Activated CD8-positive, alpha-beta T cell treated with anti-CD3 and anti-CD28 coated beads for 36 hours (primary cell): ENCODE measurements at regions of chr1 and their contacts with region 1.

Region 1: DNA sequence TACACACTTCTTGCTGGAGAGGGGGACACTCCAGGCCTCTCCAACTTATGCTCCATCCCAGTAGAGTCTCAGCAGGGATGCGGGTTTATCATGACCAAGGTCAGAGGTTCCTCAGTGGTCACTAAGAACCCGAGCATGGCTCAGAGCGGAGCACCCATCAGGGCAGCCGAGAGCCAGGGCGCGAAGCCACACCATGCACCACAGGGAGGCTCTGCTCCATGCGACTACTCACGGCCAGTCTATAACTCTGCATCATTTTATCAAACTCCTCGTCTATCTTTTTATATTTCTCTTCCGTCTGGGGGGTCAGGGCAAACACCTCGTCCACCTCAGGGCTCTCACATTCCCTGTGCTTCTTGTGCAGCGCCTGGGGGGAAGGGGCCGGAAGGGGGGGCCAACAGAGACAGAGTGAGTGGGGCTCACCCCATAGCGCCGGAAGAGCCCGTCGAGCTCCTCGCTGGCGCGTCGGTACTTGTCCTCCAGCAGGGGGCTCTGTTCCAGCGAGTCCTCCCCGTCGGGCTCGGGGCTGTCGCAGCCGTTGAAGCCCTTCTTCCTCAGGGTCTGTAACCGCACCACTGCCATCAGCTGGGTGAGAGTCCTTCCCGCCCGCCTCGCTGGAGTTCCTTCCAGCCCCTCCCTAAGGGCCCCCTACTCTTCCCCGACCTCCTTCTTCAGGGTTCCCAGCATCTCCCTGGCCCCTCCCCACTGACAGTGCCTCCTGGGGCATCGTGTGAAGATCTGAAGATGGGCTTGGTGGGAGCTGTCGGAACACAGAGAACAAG is 20.0 kb downstream of the MEF2D start:
- DNase-seq: peak; percentile 83
- ATAC-seq: peak; percentile 91
- H3K4me3 Mint-ChIP-seq: peak overlapping the region; percentile 20
- H3K27ac Mint-ChIP-seq: peak overlapping the region; percentile 79
- H3K4me1 Mint-ChIP-seq: peaks cover 58% of the 10 kb centered on the region
- H3K27me3 Mint-ChIP-seq: no peaks in the 10 kb centered on the region
- CTCF ChIP-seq: peak; percentile 73

Region 2: DNA sequence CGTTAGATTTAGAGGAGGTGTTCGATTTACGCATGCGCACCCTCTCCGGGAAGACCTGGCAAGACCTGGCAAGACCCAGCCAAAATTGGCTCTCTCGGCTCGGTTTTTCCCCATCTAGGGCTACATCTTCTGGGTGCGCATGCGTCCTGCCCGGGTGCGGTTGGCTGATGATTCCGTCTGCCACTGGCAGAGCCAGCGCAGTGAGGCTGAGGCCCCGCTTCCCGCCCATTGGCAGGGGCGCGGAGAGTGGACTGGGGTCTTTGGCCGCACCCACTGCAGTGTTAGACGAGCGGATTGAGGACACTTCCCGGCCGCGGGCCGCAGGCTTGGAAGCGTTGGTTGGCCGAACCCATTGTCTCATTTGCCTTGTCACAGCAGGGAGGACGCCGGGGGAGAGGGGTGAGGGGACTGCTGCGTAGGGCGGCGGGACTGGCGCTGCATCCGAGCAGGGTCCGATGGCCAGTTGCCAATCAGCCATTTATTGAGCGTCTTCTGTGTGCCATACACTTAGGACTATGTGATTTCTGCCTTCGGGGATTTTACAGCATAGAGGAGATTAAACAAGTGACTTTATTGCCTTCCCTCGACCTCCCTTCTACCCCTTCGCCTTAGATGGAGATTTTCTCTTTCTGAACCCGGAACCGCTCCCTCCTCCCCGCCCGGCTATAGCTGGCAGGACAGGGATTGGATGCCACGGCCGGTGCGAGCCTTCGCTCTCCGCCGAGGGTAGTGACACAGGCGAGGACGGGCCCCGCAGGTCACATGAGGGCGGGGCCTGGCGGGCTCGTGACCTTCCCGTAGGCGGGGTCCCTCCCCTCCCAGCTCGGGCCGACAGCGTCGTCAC is 23.8 kb before region 1 on chr1:
- CTCF ChIA-PET with region 1: interaction called, 22 read pairs
- POLR2A ChIA-PET with region 1: interaction called, 4 read pairs
- intact Hi-C with region 1: no loop called
- DNase-seq: peak; percentile 99
- ATAC-seq: peak; percentile 90
- H3K4me3 Mint-ChIP-seq: peak overlapping the region; percentile 91
- H3K27ac Mint-ChIP-seq: peak overlapping the region; percentile 99
- H3K4me1 Mint-ChIP-seq: peaks cover 19% of the 10 kb centered on the region
- H3K27me3 Mint-ChIP-seq: no peaks in the 10 kb centered on the region
- CTCF ChIP-seq: peak; percentile 1

Region 3: GRCh38 chr1:156500797-156501499 is 20.3 kb after region 1 on chr1:
- CTCF ChIA-PET with region 1: interaction called, 220 read pairs
- POLR2A ChIA-PET with region 1: interaction called, 245 read pairs
- intact Hi-C with region 1: no loop called
- DNase-seq: peak; percentile 94
- ATAC-seq: peak; percentile 71
- H3K4me3 Mint-ChIP-seq: peak overlapping the region; percentile 79
- H3K27ac Mint-ChIP-seq: peak overlapping the region; percentile 95
- H3K4me1 Mint-ChIP-seq: peaks cover 74% of the 10 kb centered on the region
- H3K27me3 Mint-ChIP-seq: no peaks in the 10 kb centered on the region
- CTCF ChIP-seq: peak; percentile 55

Region 4: GRCh38 chr1:156517746-156518145 is 37.1 kb after region 1 on chr1:
- CTCF ChIA-PET with region 1: interaction called, 35 read pairs
- POLR2A ChIA-PET with region 1: interaction called, 3 read pairs
- intact Hi-C with region 1: no loop called
- DNase-seq: no peak
- ATAC-seq: no peak
- H3K4me3 Mint-ChIP-seq: no peak overlapping the region
- H3K27ac Mint-ChIP-seq: no peak overlapping the region
- H3K4me1 Mint-ChIP-seq: no peaks in the 10 kb centered on the region
- H3K27me3 Mint-ChIP-seq: no peaks in the 10 kb centered on the region
- CTCF ChIP-seq: no peak

Region 5: DNA sequence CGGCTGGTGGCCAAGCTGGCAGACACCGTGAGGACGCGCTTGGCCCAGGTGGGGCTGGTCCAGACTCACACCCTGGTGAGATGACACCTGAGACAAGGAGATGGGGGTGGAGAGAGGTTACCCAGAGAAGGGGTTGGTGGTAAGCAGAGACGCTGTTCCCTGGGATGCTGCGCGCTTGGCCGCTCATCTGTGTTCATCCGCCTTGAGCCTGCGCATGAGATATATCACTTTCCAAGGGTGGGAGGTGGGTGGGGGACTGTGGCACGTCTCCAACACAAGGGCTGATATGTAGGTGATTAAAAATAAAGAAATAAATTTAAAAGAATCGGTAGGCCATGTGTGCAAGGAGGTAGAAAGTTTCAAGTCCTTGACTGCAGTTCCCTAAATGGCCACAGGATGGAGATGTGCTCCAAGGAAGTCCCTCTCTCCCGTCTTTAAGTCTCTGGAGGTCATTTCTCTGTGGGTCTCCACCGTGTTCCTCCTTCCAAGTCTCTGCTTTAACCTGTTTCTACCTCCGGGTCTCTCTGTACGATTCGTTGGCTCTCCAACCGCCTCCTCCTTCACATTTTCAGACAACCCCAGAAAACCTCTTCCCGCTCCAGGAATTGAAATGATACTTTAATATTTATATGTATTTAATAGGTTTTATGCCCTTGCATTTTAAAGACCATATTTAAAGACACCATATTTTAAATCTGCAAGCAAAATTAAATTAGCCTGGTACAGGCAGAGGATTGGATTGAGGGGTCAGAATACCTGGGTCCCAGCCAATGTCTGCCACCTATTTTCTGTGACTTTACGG is 103.4 kb after region 1 on chr1:
- CTCF ChIA-PET with region 1: interaction called, 39 read pairs
- POLR2A ChIA-PET with region 1: no interaction called
- intact Hi-C with region 1: no loop called
- DNase-seq: peak; percentile 93
- ATAC-seq: peak; percentile 43
- H3K4me3 Mint-ChIP-seq: peak overlapping the region; percentile 90
- H3K27ac Mint-ChIP-seq: peak overlapping the region; percentile 99
- H3K4me1 Mint-ChIP-seq: peaks cover 15% of the 10 kb centered on the region
- H3K27me3 Mint-ChIP-seq: no peaks in the 10 kb centered on the region
- CTCF ChIP-seq: peak; percentile 98

Region 6: DNA sequence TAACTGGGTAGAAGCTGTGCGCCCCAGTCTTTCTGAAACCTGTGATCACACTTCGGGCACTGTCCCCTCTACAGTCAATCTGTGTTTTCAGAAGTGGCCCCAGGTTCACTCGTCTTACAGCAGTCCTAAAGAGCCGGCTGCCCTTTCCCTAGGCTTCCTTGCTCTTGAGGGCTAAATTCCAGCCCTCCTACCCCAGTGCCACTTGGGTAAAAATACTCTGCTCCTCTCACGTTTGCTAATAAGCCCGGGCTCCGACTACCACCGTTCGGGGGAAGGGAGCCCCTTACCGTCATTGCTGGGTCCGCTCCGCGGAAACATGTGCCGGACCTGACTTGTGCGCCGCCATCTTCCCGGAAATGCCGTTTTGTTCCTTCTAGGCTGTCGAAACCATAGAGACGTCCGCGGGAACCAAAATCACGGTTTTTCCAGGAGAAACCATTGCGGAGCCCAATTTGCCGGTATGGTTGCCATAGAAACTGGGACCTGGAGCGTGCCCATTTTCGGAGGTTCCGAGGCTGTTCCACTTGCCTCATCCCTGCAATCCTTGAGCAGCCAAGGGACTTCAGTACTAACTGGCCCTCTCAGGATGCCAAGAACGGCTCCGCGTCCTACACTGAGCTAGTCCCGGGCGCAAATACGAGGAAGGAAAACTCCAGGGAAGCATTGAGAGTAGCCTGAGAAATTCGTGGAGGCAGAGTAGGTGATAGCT is 120.7 kb after region 1 on chr1 and contains the start of gene GPATCH4:
- CTCF ChIA-PET with region 1: interaction called, 11 read pairs
- POLR2A ChIA-PET with region 1: interaction called, 3 read pairs
- intact Hi-C with region 1: no loop called
- DNase-seq: peak; percentile 91
- ATAC-seq: peak; percentile 77
- H3K4me3 Mint-ChIP-seq: peak within 1 kb of the TSS; percentile 93
- H3K27ac Mint-ChIP-seq: peak within 1 kb of the TSS; percentile 97
- H3K4me1 Mint-ChIP-seq: peaks cover 32% of the 10 kb centered on the region
- H3K27me3 Mint-ChIP-seq: no peaks in the 10 kb centered on the region
- CTCF ChIP-seq: no peak
- total RNA-seq, gene GPATCH4: 50.7 to 51.0 TPM